ENCODE measurements at regions of chr9 and their contacts with region 1.

Region 1: GRCh38 chr9:128863647-128864046 is 18.1 kb downstream of the KYAT1 start:
- DNase-seq: peak; percentile 95
- ATAC-seq: peak; percentile 99
- H3K4me3 Mint-ChIP-seq: no peak overlapping the region
- H3K27ac Mint-ChIP-seq: peak overlapping the region; percentile 53; the same call in 1 of the 2 replicates
- H3K4me1 Mint-ChIP-seq: peaks cover 19% of the 10 kb centered on the region; the same call in 1 of the 2 replicates
- H3K27me3 Mint-ChIP-seq: no peaks in the 10 kb centered on the region
- CTCF ChIP-seq: peak; percentile 100

Region 2: GRCh38 chr9:128846680-128847030 is 17.0 kb before region 1 on chr9:
- CTCF ChIA-PET with region 1: interaction called, 13 read pairs
- POLR2A ChIA-PET with region 1: no interaction called
- DNase-seq: no peak
- ATAC-seq: no peak
- H3K4me3 Mint-ChIP-seq: no peak overlapping the region
- H3K27ac Mint-ChIP-seq: no peak overlapping the region
- H3K4me1 Mint-ChIP-seq: no peaks in the 10 kb centered on the region
- H3K27me3 Mint-ChIP-seq: no peaks in the 10 kb centered on the region
- CTCF ChIP-seq: no peak

Region 3: GRCh38 chr9:128875790-128876160 is 12.1 kb after region 1 on chr9:
- CTCF ChIA-PET with region 1: interaction called, 49 read pairs
- POLR2A ChIA-PET with region 1: no interaction called
- DNase-seq: no peak
- ATAC-seq: no peak
- H3K4me3 Mint-ChIP-seq: no peak overlapping the region
- H3K27ac Mint-ChIP-seq: no peak overlapping the region
- H3K4me1 Mint-ChIP-seq: peaks cover 11% of the 10 kb centered on the region
- H3K27me3 Mint-ChIP-seq: no peaks in the 10 kb centered on the region
- CTCF ChIP-seq: no peak

Measured in WTC11 (cell line).